Right cardiac atrium (tissue), 5 donors: ENCODE measurements at regions of chr6 and their contacts with region 1.

Region 1: GRCh38 chr6:133553652-133554051 is 312.5 kb downstream of the EYA4 start:
- DNase-seq: peak; percentile 22 to 52 (median 51)
- ATAC-seq: peak; percentile 62 to 67
- H3K4me3 ChIP-seq: no peak overlapping the region
- H3K27ac ChIP-seq: no peak overlapping the region
- H3K4me1 ChIP-seq: no peaks in the 10 kb centered on the region
- H3K27me3 ChIP-seq: no peaks in the 10 kb centered on the region

Region 2: DNA sequence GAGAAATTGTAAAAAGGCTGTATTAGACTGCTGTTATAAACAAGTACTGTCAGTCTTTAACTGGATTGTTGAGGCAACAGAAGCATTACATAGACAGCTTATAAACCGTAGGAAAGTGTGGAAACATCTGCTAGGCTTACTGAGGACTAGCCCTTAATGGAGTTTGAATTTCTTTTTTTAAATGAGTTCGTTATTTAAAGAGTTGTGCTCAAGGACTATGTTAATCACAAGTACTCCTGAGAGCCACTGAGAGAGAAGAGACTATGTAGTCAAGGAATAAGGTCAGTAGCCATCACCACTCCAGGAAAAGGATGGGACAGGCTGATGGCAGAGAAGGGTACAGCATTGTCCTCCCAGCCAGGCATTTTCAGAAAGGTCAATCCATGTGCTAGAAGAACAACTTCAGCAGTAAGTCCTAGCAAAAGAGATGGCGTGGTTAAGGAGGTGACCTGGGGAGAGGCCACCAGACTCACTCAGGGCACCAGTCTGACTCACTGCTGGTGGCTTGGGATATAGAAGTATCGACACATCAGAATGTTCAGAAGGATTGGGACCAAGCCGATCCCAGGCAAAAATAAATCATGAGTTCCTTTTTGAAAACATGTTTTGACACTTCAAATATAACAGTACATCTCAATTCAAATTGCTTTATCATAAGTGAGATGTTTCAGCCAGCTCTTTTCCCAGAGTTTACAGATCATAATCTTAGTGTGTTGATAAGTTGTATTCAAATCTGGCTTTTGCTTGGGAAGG is 732.8 kb before region 1 on chr6:
- intact Hi-C with region 1: loop called in 1 of 4 experiments (anchors 10 kb)
- DNase-seq: no peak
- ATAC-seq: peak; percentile 21 to 44
- H3K4me3 ChIP-seq: no peak overlapping the region
- H3K27ac ChIP-seq: peak overlapping the region; percentile 13
- H3K4me1 ChIP-seq: no peaks in the 10 kb centered on the region
- H3K27me3 ChIP-seq: no peaks in the 10 kb centered on the region

Region 3: GRCh38 chr6:132830334-132830751 is 723.3 kb before region 1 on chr6:
- intact Hi-C with region 1: loop called in 3 of 4 experiments (anchors 5 to 10 kb)
- DNase-seq: no peak
- ATAC-seq: no peak
- H3K4me3 ChIP-seq: no peak overlapping the region
- H3K27ac ChIP-seq: no peak overlapping the region
- H3K4me1 ChIP-seq: no peaks in the 10 kb centered on the region
- H3K27me3 ChIP-seq: no peaks in the 10 kb centered on the region

Region 4: DNA sequence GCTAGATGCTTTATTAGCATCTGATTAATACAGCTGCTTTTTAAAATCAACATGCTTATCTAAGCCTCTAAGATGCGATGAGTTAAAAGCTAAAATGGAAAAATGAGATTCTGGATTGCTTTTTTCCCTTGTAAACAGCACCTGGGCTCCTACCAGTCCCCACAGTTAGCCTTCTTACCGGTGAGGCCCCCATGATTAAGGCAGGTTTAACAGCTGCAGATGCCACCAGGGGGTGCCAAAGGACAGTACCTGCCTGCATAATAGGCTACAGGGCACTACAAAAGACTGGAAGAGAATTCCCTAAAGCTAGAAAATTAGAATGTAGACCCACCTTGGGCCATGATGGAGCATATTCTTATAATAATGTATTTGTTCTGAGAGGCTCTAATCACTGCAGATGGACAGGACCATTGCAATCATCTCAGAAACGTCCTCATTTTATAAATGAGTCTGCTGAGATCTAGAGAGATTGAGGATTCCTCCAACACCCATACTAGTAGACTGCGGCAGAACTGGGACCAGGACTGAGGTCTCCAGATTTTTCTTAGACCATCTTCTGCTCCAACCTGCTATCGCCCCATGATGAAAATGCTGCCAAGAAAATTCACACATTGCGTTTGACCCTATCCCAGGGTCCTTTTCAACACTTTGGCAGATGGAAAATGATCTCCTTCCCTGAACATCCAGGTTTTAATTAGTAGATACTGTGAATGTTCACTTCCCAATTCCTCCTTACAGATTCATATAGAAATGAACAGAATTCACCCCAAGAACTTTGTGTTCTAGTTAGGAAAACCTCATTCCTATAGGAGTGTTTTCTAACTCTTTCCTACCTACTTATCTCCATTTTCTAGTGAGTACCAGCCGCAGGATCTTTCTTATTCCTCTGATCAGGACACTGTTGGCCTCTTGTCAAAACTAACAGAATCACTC is 590.5 kb before region 1 on chr6:
- intact Hi-C with region 1: loop called in 2 of 4 experiments (anchors 5 to 10 kb)
- DNase-seq: peak; percentile 63 to 86 (median 79)
- ATAC-seq: peak; percentile 72 to 87
- H3K4me3 ChIP-seq: no peak overlapping the region
- H3K27ac ChIP-seq: no peak overlapping the region
- H3K4me1 ChIP-seq: no peaks in the 10 kb centered on the region
- H3K27me3 ChIP-seq: no peaks in the 10 kb centered on the region